ENCODE measurements at regions of chr14 and their contacts with region 1.

Region 1: DNA sequence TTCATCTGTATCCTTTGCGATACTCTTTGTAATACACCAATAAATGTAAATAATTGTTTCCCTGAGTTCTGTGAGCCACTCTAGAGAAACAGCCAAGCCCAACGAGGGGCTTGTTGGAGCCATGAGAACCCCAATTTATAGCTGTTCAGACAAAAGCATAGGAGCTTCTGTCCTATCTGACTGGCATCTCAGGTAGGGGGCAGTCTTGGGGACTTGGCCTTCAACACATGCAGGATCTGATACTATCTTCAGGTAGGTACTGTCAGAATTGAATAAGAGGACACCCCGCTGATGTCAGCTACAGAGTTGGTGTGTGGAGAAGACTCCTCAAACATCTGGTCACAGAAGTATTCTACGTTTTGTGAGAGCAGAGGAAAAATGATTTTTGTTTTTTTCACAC is 25.3 kb downstream of the TXNDC16 start:
- DNase-seq: no peak

Region 2: DNA sequence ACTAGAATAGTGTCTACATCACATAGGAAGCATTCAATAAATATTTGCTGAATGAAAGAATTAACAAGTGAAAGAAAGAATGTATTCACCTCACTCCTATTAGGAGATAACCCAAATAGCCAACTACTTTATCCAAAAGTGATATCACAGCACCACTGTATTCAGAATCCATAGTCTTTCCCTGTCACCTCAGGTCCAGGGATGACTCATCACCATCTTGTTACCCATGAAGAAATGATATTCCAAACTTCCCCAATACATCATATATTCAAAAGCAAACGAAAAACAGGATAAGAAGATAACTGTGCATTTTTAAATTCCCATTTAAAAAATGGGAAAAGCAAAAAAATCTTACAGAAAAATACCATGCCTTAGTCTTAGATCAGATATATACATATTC is 13.8 kb before region 1 on chr14:
- intact Hi-C with region 1: loop called in 1 of 2 experiments (anchors 2 kb)
- DNase-seq: no peak

Region 3: DNA sequence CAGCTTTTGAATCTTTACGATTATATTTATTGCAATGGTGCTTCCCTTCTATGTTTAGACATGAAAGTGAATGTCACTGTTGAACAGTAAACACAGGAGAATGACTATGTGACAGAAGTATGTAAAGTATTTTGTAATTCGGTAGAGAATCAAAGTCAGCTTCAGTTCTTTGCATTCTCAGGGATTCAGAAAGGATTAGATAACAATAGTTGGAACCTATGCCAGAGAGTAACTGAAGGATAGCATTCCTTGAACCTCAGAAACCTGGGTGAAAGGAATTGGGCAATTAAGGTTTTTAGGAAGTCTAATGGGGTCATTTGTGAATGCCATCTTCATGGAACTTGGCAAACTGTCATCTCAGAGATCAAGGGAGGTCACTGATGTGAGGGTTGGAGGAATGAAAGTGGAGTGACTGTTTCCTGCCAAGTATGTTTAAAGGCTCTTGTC is 931.3 kb after region 1 on chr14:
- intact Hi-C with region 1: no loop called
- DNase-seq: no peak

Measured in posterior vena cava (tissue), 2 donors.